GM12878 (cell line): ENCODE measurements at regions of chr21 and their contacts with region 1.

Region 1: DNA sequence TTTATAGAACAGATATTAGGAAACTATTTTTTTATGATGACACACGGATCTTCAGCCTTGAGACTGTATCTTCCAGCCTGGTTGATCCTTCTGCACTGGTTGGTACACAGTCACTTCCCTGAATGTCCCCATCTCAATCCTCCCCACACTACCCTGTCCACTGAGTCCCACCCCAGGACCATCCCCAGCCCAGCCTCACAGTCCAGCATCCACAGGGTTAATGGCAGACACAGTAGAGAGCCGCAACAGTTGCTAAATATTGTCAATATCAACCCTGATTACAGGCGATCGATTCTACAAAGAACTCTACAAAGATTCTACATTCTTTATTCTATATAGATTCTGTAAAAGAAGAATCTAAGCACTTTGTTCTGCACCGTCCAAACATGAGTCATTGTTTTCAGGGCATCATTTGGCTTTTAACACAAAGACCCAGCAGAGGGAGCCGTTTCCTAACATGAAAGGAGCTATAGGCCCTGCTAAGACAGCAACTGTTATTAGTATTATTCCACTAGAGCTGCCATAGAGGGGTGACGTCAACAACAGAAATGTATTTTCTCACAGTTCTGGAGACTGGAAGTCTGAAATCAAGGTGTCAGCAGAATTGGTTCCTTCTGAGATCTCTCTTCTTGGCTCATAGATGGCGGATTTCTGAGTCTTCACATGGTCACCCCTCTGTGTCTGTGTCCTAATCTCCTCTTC is 30.1 kb upstream of the IFNAR2 start:
- DNase-seq: peak; percentile 73
- ATAC-seq: peak; percentile 76
- H3K4me3 ChIP-seq: no peak overlapping the region
- H3K27ac ChIP-seq: no peak overlapping the region
- H3K4me1 ChIP-seq: peaks cover 14% of the 10 kb centered on the region
- H3K27me3 ChIP-seq: no peaks in the 10 kb centered on the region; a peak in 1 of 4 replicates
- CTCF ChIP-seq: peak; percentile 74 to 90 (median 75)
- EP300 ChIP-seq: no peak
- POLR2A ChIP-seq: no peak
- RAD21 ChIP-seq: peak; percentile 96

Region 2: GRCh38 chr21:32929633-32930038 is 270.0 kb before region 1 on chr21:
- CTCF ChIA-PET with region 1: interaction called, 19 read pairs
- POLR2A ChIA-PET with region 1: no interaction called
- RAD21 ChIA-PET with region 1: no interaction called
- SMC1A ChIA-PET with region 1: interaction called, 5 read pairs
- in situ Hi-C with region 1: no loop called
- intact Hi-C with region 1: no loop called
- DNase-seq: peak; percentile 69
- ATAC-seq: peak; percentile 79
- H3K4me3 ChIP-seq: no peak overlapping the region; the same call in 1 of the 2 replicates
- H3K27ac ChIP-seq: peak overlapping the region; percentile 73
- H3K4me1 ChIP-seq: peaks cover 31% of the 10 kb centered on the region
- H3K27me3 ChIP-seq: no peaks in the 10 kb centered on the region
- CTCF ChIP-seq: no peak
- EP300 ChIP-seq: peak; percentile 33 to 36; a peak in 2 of 4 replicates
- POLR2A ChIP-seq: no peak
- RAD21 ChIP-seq: no peak

Region 3: GRCh38 chr21:33078907-33079582 is 120.6 kb before region 1 on chr21:
- CTCF ChIA-PET with region 1: interaction called, 8 read pairs
- POLR2A ChIA-PET with region 1: no interaction called
- RAD21 ChIA-PET with region 1: interaction called, 4 read pairs
- SMC1A ChIA-PET with region 1: interaction called, 3 read pairs
- in situ Hi-C with region 1: no loop called
- intact Hi-C with region 1: loop called (anchors 10 kb)
- DNase-seq: peak; percentile 88
- ATAC-seq: peak; percentile 98
- H3K4me3 ChIP-seq: no peak overlapping the region
- H3K27ac ChIP-seq: no peak overlapping the region
- H3K4me1 ChIP-seq: peaks cover 18% of the 10 kb centered on the region
- H3K27me3 ChIP-seq: peaks cover 4 to 6% of the 10 kb centered on the region in 2 experiments
- CTCF ChIP-seq: peak in 1 of 3 experiments; percentile 19; a peak in 2 of 6 replicates
- EP300 ChIP-seq: peak; percentile 87 to 90
- POLR2A ChIP-seq: no peak
- RAD21 ChIP-seq: no peak

Region 4: DNA sequence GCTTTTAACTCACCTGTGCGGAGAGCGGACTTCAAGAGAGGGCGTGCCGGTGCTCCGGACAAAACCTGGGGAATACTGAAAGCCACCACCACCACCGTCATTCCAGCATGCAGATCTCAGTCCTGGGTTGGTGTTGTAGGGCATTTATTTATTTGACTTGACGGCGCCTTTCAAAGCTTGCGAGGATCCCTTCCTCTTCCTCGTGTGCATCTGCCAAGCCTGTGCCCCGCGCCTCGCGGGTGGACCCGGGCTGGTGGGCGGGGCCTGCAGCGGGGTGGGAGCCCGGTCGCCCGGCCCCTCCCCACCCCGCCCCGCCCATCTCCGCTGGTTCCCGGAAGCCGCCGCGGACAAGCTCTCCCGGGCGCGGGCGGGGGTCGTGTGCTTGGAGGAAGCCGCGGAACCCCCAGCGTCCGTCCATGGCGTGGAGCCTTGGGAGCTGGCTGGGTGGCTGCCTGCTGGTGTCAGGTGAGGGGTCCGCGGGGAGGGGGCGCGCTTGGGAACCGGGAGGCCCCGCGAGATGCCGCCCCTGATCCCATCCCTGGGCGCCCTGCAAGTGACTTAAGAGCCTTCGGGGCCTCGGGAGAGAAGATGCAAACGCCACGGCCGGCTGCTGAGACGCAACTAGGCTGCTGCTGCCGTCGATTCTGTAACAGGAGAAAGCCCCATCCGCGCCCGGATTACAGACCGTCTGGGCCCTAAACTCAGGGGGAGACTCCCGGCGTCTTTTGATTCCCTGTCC is 66.6 kb after region 1 on chr21 and contains the start of gene IL10RB:
- CTCF ChIA-PET with region 1: interaction called, 10 read pairs
- POLR2A ChIA-PET with region 1: interaction called, 12 read pairs
- RAD21 ChIA-PET with region 1: interaction called, 14 read pairs
- SMC1A ChIA-PET with region 1: interaction called, 21 read pairs
- in situ Hi-C with region 1: no loop called
- intact Hi-C with region 1: loop called (anchors 2 kb)
- DNase-seq: peak; percentile 27
- ATAC-seq: peak; percentile 72
- H3K4me3 ChIP-seq: peak within 1 kb of the TSS; percentile 81
- H3K27ac ChIP-seq: peak within 1 kb of the TSS; percentile 96
- H3K4me1 ChIP-seq: peaks cover 28% of the 10 kb centered on the region
- H3K27me3 ChIP-seq: no peaks in the 10 kb centered on the region
- CTCF ChIP-seq: no peak
- EP300 ChIP-seq: no peak
- POLR2A ChIP-seq: peak; percentile 88
- RAD21 ChIP-seq: no peak
- polyA plus RNA-seq, gene IL10RB: 15.0 to 23.3 TPM

Region 5: DNA sequence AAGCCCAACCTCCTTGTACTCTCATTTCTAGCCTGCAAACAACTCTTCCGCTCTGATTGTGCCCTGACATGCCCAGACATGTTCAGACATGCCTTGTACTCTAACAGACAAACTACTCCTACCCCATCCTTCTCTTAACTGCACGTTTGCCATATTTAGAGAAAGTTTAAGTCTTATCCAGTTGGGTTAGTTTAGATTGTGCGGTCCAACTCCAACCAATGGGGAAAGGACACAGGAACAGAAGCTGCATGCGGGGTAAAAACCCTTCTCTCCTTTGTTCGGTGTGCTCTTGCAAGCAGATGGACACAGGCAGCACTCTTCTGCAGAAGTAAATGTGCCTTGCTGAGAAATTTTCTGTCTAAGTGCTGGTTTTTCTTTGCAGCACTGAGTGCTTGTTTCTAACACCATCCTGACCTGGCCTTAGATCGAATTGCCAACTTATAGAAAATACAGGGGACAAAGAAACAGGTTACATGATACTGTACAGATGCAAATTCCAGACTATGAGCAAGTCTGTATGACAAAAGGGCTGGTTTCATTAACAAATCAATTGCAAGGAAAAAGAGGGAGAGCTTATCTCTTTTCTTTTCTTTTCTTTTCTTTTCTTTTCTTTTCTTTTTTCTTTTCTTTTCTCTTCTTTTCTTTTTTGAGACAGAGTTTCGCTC is 167.8 kb after region 1 on chr21:
- CTCF ChIA-PET with region 1: interaction called, 57 read pairs
- POLR2A ChIA-PET with region 1: interaction called, 3 read pairs
- RAD21 ChIA-PET with region 1: interaction called, 40 read pairs
- SMC1A ChIA-PET with region 1: interaction called, 34 read pairs
- in situ Hi-C with region 1: no loop called
- intact Hi-C with region 1: no loop called
- DNase-seq: no peak
- ATAC-seq: no peak
- H3K4me3 ChIP-seq: no peak overlapping the region
- H3K27ac ChIP-seq: no peak overlapping the region
- H3K4me1 ChIP-seq: peaks cover 5% of the 10 kb centered on the region; the same call in 1 of the 2 replicates
- H3K27me3 ChIP-seq: no peaks in the 10 kb centered on the region
- CTCF ChIP-seq: no peak
- EP300 ChIP-seq: no peak
- POLR2A ChIP-seq: no peak
- RAD21 ChIP-seq: no peak

Region 6: GRCh38 chr21:33386222-33386784 is 186.6 kb after region 1 on chr21:
- CTCF ChIA-PET with region 1: interaction called, 10 read pairs
- POLR2A ChIA-PET with region 1: interaction called, 4 read pairs
- RAD21 ChIA-PET with region 1: interaction called, 12 read pairs
- SMC1A ChIA-PET with region 1: interaction called, 6 read pairs
- in situ Hi-C with region 1: loop called (anchors 5 kb)
- intact Hi-C with region 1: loop called (anchors 2 kb)
- DNase-seq: no peak
- ATAC-seq: no peak
- H3K4me3 ChIP-seq: no peak overlapping the region
- H3K27ac ChIP-seq: no peak overlapping the region
- H3K4me1 ChIP-seq: peaks cover 35% of the 10 kb centered on the region
- H3K27me3 ChIP-seq: no peaks in the 10 kb centered on the region
- CTCF ChIP-seq: peak in 1 of 3 experiments; percentile 34; a peak in 1 of 6 replicates
- EP300 ChIP-seq: no peak
- POLR2A ChIP-seq: no peak
- RAD21 ChIP-seq: no peak